Aorta (tissue), 5 donors: ENCODE measurements at regions of chr1 and their contacts with region 1.

Region 1: DNA sequence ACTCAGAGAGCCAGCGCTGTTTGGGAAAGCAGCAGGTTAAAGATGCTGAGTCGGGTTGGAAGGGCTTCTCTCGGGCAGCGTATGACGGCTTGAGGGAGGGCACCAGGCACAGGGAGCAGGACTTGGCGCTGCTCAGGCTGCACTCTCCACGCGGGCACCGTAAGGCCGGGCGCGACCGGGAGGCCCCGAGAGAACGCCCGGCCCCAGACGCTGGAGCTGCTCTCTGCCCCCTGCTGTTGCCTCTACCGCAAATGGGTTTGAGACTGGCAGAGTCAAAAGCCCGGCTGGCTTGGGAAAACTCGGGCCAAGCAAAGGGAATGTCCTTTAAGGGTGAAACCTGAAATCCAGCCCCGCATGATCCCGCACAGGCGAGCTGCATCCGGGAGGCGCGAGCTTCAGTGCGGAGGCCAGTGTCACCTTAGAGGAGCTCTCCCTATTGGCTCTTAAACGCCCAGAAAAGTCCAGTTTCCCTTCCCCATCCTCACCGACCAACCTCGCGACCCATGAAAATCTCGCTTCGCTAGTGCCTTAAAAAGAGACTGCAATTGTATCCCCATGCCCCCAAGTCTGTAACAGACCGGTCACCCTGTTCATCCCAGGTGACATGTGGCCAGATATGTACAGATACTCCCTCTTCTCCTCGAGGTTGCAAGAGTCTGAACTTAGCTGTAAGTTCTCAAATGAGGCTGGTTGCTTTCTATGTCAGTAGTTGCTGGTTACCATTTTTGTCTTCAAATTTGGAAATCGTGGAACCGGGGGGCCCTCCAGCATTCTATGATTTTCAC is 1.1 kb downstream of the PRRX1 start:
- DNase-seq: peak; percentile 72 to 88
- ATAC-seq: peak; percentile 69
- H3K4me3 ChIP-seq: peak overlapping the region; percentile 90 to 91
- H3K27ac ChIP-seq: peak overlapping the region; percentile 71 to 83
- H3K4me1 ChIP-seq: no peaks in the 10 kb centered on the region
- H3K27me3 ChIP-seq: no peaks in the 10 kb centered on the region

Region 2: DNA sequence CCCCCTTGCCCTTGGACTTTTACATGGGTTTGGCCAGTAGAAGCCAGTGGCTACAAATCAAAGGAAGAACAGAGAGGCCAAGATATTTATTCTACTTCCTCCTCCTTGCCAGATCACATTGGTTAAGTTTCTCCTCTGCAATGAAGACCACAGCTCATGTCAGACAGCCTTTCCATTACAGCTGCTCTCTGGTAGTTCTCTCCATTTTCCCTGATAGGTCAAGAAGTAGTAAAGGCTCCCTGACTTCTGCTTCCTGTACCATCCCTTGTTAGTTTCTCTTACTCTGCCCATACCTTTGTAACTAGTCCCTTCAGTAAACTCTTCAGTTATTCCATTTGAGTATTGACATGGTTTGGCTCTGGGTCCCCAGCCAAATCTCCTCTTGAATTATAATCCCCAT is 1325.2 kb before region 1 on chr1:
- intact Hi-C with region 1: no loop called
- DNase-seq: no peak
- ATAC-seq: no peak
- H3K4me3 ChIP-seq: no peak overlapping the region
- H3K27ac ChIP-seq: no peak overlapping the region
- H3K4me1 ChIP-seq: no peaks in the 10 kb centered on the region
- H3K27me3 ChIP-seq: no peaks in the 10 kb centered on the region

Region 3: DNA sequence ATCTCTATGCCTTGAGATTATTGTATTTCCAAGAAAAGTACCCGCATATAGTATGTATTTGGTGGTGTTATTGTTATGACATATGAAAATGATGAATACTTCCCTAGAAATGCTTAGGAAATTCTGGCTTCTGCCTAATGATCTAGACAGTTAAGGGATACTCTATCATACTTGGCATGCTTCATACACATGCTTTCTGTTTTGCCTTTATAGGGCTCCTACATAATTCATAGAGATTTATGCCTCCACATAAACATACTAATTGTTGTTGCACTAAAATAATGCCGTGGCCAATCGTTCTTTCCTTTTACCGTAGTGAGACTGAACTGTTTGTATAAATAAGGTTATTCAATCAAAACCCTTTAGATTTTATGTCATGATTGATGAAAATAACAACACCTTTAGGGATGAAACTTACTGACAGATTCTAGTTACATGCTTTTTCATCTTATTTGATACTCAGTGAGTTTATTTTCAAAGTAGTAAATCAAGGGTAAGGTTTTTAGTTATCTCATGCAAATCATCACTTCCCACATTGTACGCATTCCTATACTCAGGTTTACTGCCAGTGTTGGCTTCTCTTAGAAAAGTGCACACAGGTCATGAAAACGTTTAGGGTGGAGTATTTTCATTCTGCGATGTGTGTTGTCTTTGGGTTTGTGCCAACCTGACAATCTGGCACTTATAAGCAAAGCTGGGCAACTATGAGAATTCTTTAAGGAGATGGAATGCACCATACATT is 730.9 kb before region 1 on chr1:
- intact Hi-C with region 1: loop called (anchors 5 to 10 kb)
- DNase-seq: no peak
- ATAC-seq: no peak
- H3K4me3 ChIP-seq: no peak overlapping the region
- H3K27ac ChIP-seq: no peak overlapping the region
- H3K4me1 ChIP-seq: peaks cover 0 to 2% of the 10 kb centered on the region in 2 donors
- H3K27me3 ChIP-seq: no peaks in the 10 kb centered on the region

Region 4: GRCh38 chr1:170410401-170411166 is 254.4 kb before region 1 on chr1:
- intact Hi-C with region 1: loop called in 1 of 2 experiments (anchors 10 kb)
- DNase-seq: no peak
- ATAC-seq: peak; percentile 77
- H3K4me3 ChIP-seq: no peak overlapping the region
- H3K27ac ChIP-seq: peak overlapping the region in 1 of 2 donors; percentile 51
- H3K4me1 ChIP-seq: peaks cover 1 to 3% of the 10 kb centered on the region in 2 donors
- H3K27me3 ChIP-seq: no peaks in the 10 kb centered on the region

Region 5: GRCh38 chr1:170531758-170532657 is 133.0 kb before region 1 on chr1 and contains the start of gene GORAB:
- intact Hi-C with region 1: loop called (anchors 5 kb)
- DNase-seq: peak; percentile 96 to 97
- ATAC-seq: peak; percentile 97
- H3K4me3 ChIP-seq: peak within 1 kb of the TSS; percentile 78 to 87
- H3K27ac ChIP-seq: peak within 1 kb of the TSS; percentile 83 to 97
- H3K4me1 ChIP-seq: peaks cover 0 to 5% of the 10 kb centered on the region in 2 donors
- H3K27me3 ChIP-seq: no peaks in the 10 kb centered on the region
- total RNA-seq, gene GORAB: 16.1 to 18.4 TPM

Region 6: DNA sequence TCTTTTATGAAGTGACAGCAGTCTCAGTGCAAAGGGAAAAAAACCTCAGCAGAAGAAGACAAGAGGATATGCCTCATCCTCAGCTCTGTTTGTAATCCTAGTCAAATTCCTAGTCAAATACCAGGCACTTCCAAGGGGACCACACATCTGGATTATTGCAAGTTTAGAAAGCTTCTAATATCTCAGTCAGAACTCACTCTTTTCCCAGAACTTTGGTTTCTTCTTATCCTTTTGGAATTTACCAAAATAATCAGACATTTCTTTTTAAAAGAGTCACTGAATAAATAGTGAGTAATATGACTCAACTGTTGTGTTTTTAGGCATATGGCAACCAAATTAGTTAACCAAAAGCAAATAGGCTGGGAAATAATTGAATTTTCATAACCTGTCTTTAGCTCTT is 46.7 kb after region 1 on chr1:
- intact Hi-C with region 1: loop called in 1 of 2 experiments (anchors 5 kb)
- DNase-seq: no peak
- ATAC-seq: no peak
- H3K4me3 ChIP-seq: no peak overlapping the region
- H3K27ac ChIP-seq: peak overlapping the region; percentile 36 to 93
- H3K4me1 ChIP-seq: peaks cover 1 to 19% of the 10 kb centered on the region in 2 donors
- H3K27me3 ChIP-seq: no peaks in the 10 kb centered on the region

Region 7: GRCh38 chr1:170978371-170978910 is 313.4 kb after region 1 on chr1:
- intact Hi-C with region 1: no loop called
- DNase-seq: no peak
- ATAC-seq: no peak
- H3K4me3 ChIP-seq: no peak overlapping the region
- H3K27ac ChIP-seq: no peak overlapping the region
- H3K4me1 ChIP-seq: no peaks in the 10 kb centered on the region
- H3K27me3 ChIP-seq: no peaks in the 10 kb centered on the region